ENCODE measurements at regions of chr1 and their contacts with region 1.

Region 1: GRCh38 chr1:201703621-201704439 is 125.1 kb upstream of the IPO9 start:
- DNase-seq: peak; percentile 94

Region 2: GRCh38 chr1:201530741-201531531 is 172.9 kb before region 1 on chr1:
- intact Hi-C with region 1: loop called (anchors 2 kb)
- DNase-seq: peak; percentile 90

Region 3: GRCh38 chr1:201559679-201560162 is 144.1 kb before region 1 on chr1:
- intact Hi-C with region 1: loop called (anchors 1 kb)
- DNase-seq: peak; percentile 93

Region 4: GRCh38 chr1:201807958-201808632 is 104.3 kb after region 1 on chr1:
- intact Hi-C with region 1: no loop called
- DNase-seq: no peak

Region 5: GRCh38 chr1:202029171-202029665 is 325.4 kb after region 1 on chr1:
- intact Hi-C with region 1: no loop called
- DNase-seq: no peak

Measured in cardiac septum (tissue), 1 donor.